GM12878 (cell line): ENCODE measurements at regions of chr3 and their contacts with region 1.

Region 1: GRCh38 chr3:66971891-66972551 is 26.1 kb upstream of the KBTBD8 start:
- DNase-seq: peak; percentile 45
- ATAC-seq: peak; percentile 100
- H3K4me3 ChIP-seq: peak overlapping the region; percentile 6; the same call in 1 of the 2 replicates
- H3K27ac ChIP-seq: no peak overlapping the region
- H3K4me1 ChIP-seq: no peaks in the 10 kb centered on the region
- H3K27me3 ChIP-seq: peaks cover 0 to 2% of the 10 kb centered on the region in 2 experiments; a peak in 1 of 4 replicates
- CTCF ChIP-seq: peak; percentile 90 to 92 (median 90)
- EP300 ChIP-seq: no peak
- POLR2A ChIP-seq: no peak
- RAD21 ChIP-seq: peak; percentile 87

Region 2: DNA sequence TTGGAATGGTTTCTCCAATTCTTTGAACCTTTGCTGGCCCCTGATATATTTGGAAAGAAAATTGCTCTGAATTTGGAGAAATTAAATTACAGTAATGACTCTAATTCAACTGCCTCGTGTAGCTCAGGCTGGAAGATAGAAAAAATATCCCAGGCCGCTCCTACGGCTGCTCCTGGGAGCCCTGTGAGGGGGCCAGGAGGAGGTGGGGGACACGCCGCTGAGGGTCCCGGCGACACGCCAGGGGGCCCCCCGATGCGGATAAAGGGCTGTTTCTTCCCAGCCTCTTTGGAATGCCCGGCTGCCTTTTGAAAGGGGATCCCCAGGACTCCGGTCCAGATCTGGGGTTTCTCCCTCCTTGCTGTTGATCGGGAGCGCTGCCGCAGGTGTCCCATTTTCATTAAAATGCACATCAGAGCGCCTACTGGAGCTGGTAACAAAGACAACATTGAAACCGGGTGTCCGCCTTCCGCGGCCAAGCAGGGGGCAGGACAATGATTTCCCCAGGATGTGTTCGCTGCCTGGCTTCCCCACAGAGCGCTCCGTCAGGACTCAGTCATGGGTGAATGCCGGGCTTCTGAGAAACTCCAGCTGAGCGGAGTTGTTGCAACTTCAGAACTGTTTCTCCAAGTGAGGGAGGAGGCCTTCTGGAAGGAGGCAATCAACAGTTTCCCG is 174.0 kb before region 1 on chr3:
- CTCF ChIA-PET with region 1: no interaction called
- POLR2A ChIA-PET with region 1: no interaction called
- RAD21 ChIA-PET with region 1: no interaction called
- SMC1A ChIA-PET with region 1: no interaction called
- in situ Hi-C with region 1: no loop called
- intact Hi-C with region 1: no loop called
- DNase-seq: no peak
- ATAC-seq: no peak
- H3K4me3 ChIP-seq: no peak overlapping the region
- H3K27ac ChIP-seq: no peak overlapping the region
- H3K4me1 ChIP-seq: no peaks in the 10 kb centered on the region
- H3K27me3 ChIP-seq: no peaks in the 10 kb centered on the region
- CTCF ChIP-seq: no peak
- EP300 ChIP-seq: no peak
- POLR2A ChIP-seq: no peak
- RAD21 ChIP-seq: no peak

Region 3: GRCh38 chr3:66938338-66938963 is 33.6 kb before region 1 on chr3:
- CTCF ChIA-PET with region 1: interaction called, 31 read pairs
- POLR2A ChIA-PET with region 1: no interaction called
- RAD21 ChIA-PET with region 1: interaction called, 14 read pairs
- SMC1A ChIA-PET with region 1: interaction called, 4 read pairs
- in situ Hi-C with region 1: no loop called
- intact Hi-C with region 1: no loop called
- DNase-seq: peak; percentile 5
- ATAC-seq: peak; percentile 92
- H3K4me3 ChIP-seq: no peak overlapping the region
- H3K27ac ChIP-seq: no peak overlapping the region
- H3K4me1 ChIP-seq: no peaks in the 10 kb centered on the region
- H3K27me3 ChIP-seq: no peaks in the 10 kb centered on the region
- CTCF ChIP-seq: peak; percentile 69 to 72 (median 72)
- EP300 ChIP-seq: no peak
- POLR2A ChIP-seq: no peak
- RAD21 ChIP-seq: peak; percentile 77

Region 4: DNA sequence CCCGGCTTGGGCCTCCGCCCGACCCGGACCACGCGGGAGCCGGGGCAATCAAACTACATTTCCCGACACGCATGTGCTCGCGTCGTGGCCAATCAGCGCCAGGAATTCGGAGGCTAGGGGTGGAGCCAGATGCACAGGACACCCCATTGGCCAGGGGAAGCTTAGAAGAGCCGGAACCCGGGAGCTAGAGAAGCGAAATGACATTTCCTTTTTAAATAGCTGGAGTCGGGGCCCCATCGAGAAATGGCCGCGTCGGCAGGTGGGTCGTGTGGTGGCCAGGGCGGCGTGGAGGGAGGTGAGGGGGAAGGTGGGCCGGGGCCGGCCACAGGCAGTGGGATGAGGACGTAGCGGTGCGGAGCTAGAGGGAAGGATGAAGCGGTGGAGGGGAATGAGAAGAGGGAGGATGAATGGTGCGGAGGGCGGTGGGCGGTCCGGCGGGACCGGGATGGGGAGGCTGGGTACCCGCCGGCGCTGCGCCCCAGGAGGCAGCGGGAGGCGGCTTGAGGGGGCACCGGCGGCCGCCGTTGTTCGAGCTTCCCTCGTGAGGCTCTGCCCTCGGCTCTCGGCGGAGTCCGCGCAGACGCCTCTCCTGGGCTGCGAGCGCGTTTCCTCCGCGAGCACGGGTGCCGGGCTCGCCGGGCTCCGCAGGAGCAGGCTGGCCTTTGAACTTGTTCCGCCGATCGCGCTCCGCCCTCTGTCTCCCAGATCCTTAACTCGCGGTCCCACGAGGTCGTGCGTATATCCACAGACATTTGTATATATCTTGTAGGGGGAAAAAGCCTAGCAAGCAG is 26.3 kb after region 1 on chr3 and contains the start of gene KBTBD8:
- CTCF ChIA-PET with region 1: interaction called, 7 read pairs
- POLR2A ChIA-PET with region 1: no interaction called
- RAD21 ChIA-PET with region 1: interaction called, 8 read pairs
- SMC1A ChIA-PET with region 1: interaction called, 20 read pairs
- in situ Hi-C with region 1: no loop called
- intact Hi-C with region 1: no loop called
- DNase-seq: peak; percentile 96
- ATAC-seq: peak; percentile 93
- H3K4me3 ChIP-seq: peak within 1 kb of the TSS; percentile 92
- H3K27ac ChIP-seq: peak within 1 kb of the TSS; percentile 74
- H3K4me1 ChIP-seq: peaks cover 8% of the 10 kb centered on the region; the same call in 1 of the 2 replicates
- H3K27me3 ChIP-seq: no peaks in the 10 kb centered on the region
- CTCF ChIP-seq: no peak
- EP300 ChIP-seq: no peak
- POLR2A ChIP-seq: peak; percentile 74; the same call in 1 of the 2 replicates
- RAD21 ChIP-seq: no peak
- polyA plus RNA-seq, gene KBTBD8: 8.5 to 9.2 TPM

Region 5: GRCh38 chr3:67037615-67038014 is 65.6 kb after region 1 on chr3:
- CTCF ChIA-PET with region 1: interaction called, 13 read pairs
- POLR2A ChIA-PET with region 1: no interaction called
- RAD21 ChIA-PET with region 1: no interaction called
- SMC1A ChIA-PET with region 1: interaction called, 6 read pairs
- in situ Hi-C with region 1: no loop called
- intact Hi-C with region 1: loop called (anchors 2 kb)
- DNase-seq: no peak
- ATAC-seq: no peak
- H3K4me3 ChIP-seq: no peak overlapping the region
- H3K27ac ChIP-seq: no peak overlapping the region
- H3K4me1 ChIP-seq: no peaks in the 10 kb centered on the region
- H3K27me3 ChIP-seq: no peaks in the 10 kb centered on the region
- CTCF ChIP-seq: peak in 1 of 3 experiments; percentile 8; a peak in 2 of 6 replicates
- EP300 ChIP-seq: no peak
- POLR2A ChIP-seq: no peak
- RAD21 ChIP-seq: peak; percentile 47

Region 6: GRCh38 chr3:67239353-67239752 is 267.3 kb after region 1 on chr3:
- CTCF ChIA-PET with region 1: no interaction called
- POLR2A ChIA-PET with region 1: no interaction called
- RAD21 ChIA-PET with region 1: no interaction called
- SMC1A ChIA-PET with region 1: no interaction called
- in situ Hi-C with region 1: no loop called
- intact Hi-C with region 1: loop called (anchors 10 kb)
- DNase-seq: no peak
- ATAC-seq: no peak
- H3K4me3 ChIP-seq: no peak overlapping the region
- H3K27ac ChIP-seq: no peak overlapping the region
- H3K4me1 ChIP-seq: no peaks in the 10 kb centered on the region
- H3K27me3 ChIP-seq: peaks cover 0 to 1% of the 10 kb centered on the region in 2 experiments; a peak in 1 of 4 replicates
- CTCF ChIP-seq: no peak
- EP300 ChIP-seq: no peak
- POLR2A ChIP-seq: no peak
- RAD21 ChIP-seq: no peak

Region 7: GRCh38 chr3:67346081-67346480 is 374.1 kb after region 1 on chr3:
- CTCF ChIA-PET with region 1: no interaction called
- POLR2A ChIA-PET with region 1: no interaction called
- RAD21 ChIA-PET with region 1: no interaction called
- SMC1A ChIA-PET with region 1: no interaction called
- in situ Hi-C with region 1: no loop called
- intact Hi-C with region 1: no loop called
- DNase-seq: no peak
- ATAC-seq: no peak
- H3K4me3 ChIP-seq: no peak overlapping the region
- H3K27ac ChIP-seq: no peak overlapping the region
- H3K4me1 ChIP-seq: peaks cover 7% of the 10 kb centered on the region
- H3K27me3 ChIP-seq: no peaks in the 10 kb centered on the region
- CTCF ChIP-seq: no peak
- EP300 ChIP-seq: no peak
- POLR2A ChIP-seq: no peak
- RAD21 ChIP-seq: no peak

Region 8: GRCh38 chr3:67790043-67790442 is 818.0 kb after region 1 on chr3:
- CTCF ChIA-PET with region 1: interaction called, 8 read pairs
- POLR2A ChIA-PET with region 1: no interaction called
- RAD21 ChIA-PET with region 1: no interaction called
- SMC1A ChIA-PET with region 1: no interaction called
- in situ Hi-C with region 1: loop called (anchors 25 kb)
- intact Hi-C with region 1: loop called (anchors 10 kb)
- DNase-seq: peak; percentile 27
- ATAC-seq: peak; percentile 96
- H3K4me3 ChIP-seq: no peak overlapping the region
- H3K27ac ChIP-seq: no peak overlapping the region
- H3K4me1 ChIP-seq: no peaks in the 10 kb centered on the region
- H3K27me3 ChIP-seq: no peaks in the 10 kb centered on the region
- CTCF ChIP-seq: peak; percentile 72 to 76 (median 74)
- EP300 ChIP-seq: no peak
- POLR2A ChIP-seq: no peak
- RAD21 ChIP-seq: peak; percentile 94

Region 9: DNA sequence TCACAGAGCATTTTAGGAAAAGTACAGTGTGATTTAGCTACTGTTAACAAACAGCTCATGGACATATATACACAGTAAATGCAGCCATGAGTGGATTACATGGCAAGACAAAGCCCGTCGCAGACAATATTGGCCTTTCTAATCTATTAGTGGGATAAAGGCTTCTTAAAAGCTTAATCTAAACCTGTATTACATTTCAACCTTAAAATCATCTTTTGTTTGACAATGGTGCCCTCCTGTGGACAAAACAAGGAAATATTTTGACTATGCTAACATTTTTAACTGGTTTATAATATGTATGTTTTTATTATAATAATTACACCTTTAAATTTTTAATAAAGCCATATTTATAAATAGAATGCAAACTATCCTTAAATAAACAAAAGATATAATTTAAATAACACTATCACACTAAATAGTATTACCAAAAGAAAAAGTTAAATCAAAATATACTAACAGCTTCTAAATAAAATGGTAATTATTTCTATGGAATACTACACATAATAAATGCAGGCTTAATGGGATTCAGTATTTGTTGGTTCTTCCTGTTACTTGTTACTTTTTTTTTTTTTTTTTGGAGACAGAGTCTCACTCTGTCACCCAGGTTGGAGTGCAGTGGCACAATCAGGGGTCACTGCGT is 1921.7 kb after region 1 on chr3:
- CTCF ChIA-PET with region 1: interaction called, 3 read pairs
- POLR2A ChIA-PET with region 1: no interaction called
- RAD21 ChIA-PET with region 1: interaction called, 3 read pairs
- SMC1A ChIA-PET with region 1: no interaction called
- in situ Hi-C with region 1: no loop called
- intact Hi-C with region 1: loop called (anchors 10 kb)
- DNase-seq: no peak
- ATAC-seq: no peak
- H3K4me3 ChIP-seq: no peak overlapping the region
- H3K27ac ChIP-seq: no peak overlapping the region
- H3K4me1 ChIP-seq: no peaks in the 10 kb centered on the region
- H3K27me3 ChIP-seq: no peaks in the 10 kb centered on the region
- CTCF ChIP-seq: peak; percentile 13 to 53 (median 47); a peak in 3 of 6 replicates
- EP300 ChIP-seq: no peak
- POLR2A ChIP-seq: no peak
- RAD21 ChIP-seq: peak; percentile 54